Esophagus muscularis mucosa (tissue), 4 donors: ENCODE measurements at regions of chr2 and their contacts with region 1.

Region 1: GRCh38 chr2:205834796-205835195 is 152.5 kb downstream of the NRP2 start:
- DNase-seq: no peak
- H3K4me3 ChIP-seq: no peak overlapping the region
- H3K27ac ChIP-seq: peak overlapping the region; percentile 75 to 83 (median 80)
- H3K4me1 ChIP-seq: peaks cover 3 to 53% (median 45%) of the 10 kb centered on the region in 4 donors
- H3K27me3 ChIP-seq: no peaks in the 10 kb centered on the region
- CTCF ChIP-seq: no peak
- EP300 ChIP-seq: no peak
- POLR2A ChIP-seq: no peak

Region 2: GRCh38 chr2:205660521-205661124 is 174.2 kb before region 1 on chr2:
- intact Hi-C with region 1: no loop called
- DNase-seq: peak; percentile 91
- H3K4me3 ChIP-seq: no peak overlapping the region
- H3K27ac ChIP-seq: no peak overlapping the region
- H3K4me1 ChIP-seq: peaks cover 0 to 30% (median 21%) of the 10 kb centered on the region in 4 donors
- H3K27me3 ChIP-seq: no peaks in the 10 kb centered on the region
- CTCF ChIP-seq: no peak
- EP300 ChIP-seq: no peak
- POLR2A ChIP-seq: no peak

Region 3: DNA sequence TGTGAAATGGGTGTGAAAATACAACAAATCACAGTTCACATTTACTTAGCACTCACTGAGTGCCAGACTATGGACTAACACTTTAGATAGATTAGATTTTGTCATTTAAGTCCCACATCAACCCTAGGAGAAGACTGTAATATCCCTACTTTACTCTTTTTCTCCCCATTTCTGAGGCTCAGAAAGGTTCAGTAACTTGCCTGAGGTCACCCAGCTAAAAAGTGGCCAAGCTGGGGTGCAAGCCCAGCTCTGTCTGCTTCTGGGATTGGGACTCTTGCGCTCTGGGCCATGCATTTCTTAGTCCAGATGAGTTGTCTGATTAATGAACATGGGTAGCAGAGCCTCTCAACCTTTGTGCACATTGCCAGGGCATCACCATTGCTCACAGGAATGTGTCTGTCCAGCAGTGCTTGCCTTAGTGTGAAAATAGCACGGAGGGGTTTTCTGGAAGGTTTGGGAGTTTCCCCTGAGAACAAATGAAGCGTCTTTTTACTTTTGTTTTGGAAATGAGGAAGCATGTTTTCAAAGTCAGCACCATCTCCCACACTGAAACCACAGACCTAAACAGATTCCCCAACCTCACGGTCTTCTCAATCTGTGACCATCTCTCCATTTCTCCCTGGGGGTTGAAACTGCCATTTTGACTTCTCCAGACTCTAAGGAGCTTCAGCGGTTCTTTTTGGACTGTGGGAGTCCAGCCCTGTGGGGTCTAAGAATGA is 120.6 kb before region 1 on chr2:
- intact Hi-C with region 1: no loop called
- DNase-seq: no peak
- H3K4me3 ChIP-seq: no peak overlapping the region
- H3K27ac ChIP-seq: peak overlapping the region; percentile 87 to 98 (median 93)
- H3K4me1 ChIP-seq: peaks cover 6 to 100% (median 95%) of the 10 kb centered on the region in 4 donors
- H3K27me3 ChIP-seq: no peaks in the 10 kb centered on the region
- CTCF ChIP-seq: no peak
- EP300 ChIP-seq: no peak
- POLR2A ChIP-seq: no peak

Region 4: GRCh38 chr2:205776139-205776538 is 58.7 kb before region 1 on chr2:
- intact Hi-C with region 1: loop called (anchors 2 kb)
- DNase-seq: no peak
- H3K4me3 ChIP-seq: no peak overlapping the region
- H3K27ac ChIP-seq: peak overlapping the region; percentile 80 to 98 (median 90)
- H3K4me1 ChIP-seq: peaks cover 0 to 100% (median 95%) of the 10 kb centered on the region in 4 donors
- H3K27me3 ChIP-seq: no peaks in the 10 kb centered on the region
- CTCF ChIP-seq: peak; percentile 37 to 67 (median 49)
- EP300 ChIP-seq: no peak
- POLR2A ChIP-seq: no peak

Region 5: GRCh38 chr2:205872716-205873115 is 37.9 kb after region 1 on chr2:
- intact Hi-C with region 1: loop called (anchors 5 kb)
- DNase-seq: no peak
- H3K4me3 ChIP-seq: no peak overlapping the region
- H3K27ac ChIP-seq: no peak overlapping the region
- H3K4me1 ChIP-seq: no peaks in the 10 kb centered on the region
- H3K27me3 ChIP-seq: no peaks in the 10 kb centered on the region
- CTCF ChIP-seq: no peak
- EP300 ChIP-seq: no peak
- POLR2A ChIP-seq: no peak

Region 6: DNA sequence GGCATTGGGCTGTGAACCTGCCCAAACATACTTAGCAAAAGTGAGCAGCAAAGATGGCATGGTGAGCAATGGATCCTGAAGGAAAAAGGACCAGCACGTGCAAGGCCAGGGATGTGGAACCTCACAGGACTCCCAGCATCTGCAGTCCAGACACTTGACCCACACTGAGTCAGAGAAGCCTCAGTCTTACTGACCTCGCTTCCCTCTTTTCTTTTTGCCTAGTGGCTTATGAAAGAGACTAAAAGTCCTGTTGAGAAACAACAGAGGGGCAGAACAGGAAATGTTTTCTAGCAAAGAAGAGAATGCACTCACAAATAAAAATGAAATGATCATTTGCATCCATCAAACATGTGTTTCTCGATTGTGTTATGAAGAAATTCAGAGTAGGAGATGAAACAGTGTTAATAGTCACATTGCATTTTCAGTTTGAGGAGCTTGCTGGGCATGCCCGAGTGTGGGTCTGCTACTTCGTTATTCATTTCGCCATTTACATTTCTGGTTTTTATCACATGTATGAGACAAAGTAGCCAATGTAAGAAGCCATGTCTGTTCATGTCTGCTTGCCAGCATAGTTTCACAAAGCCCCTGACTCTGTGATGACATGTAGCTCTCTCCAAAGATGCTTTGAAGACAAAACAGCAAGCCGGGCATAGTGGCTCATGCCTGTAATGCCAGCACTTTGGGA is 132.7 kb after region 1 on chr2:
- intact Hi-C with region 1: no loop called
- DNase-seq: no peak
- H3K4me3 ChIP-seq: no peak overlapping the region
- H3K27ac ChIP-seq: no peak overlapping the region
- H3K4me1 ChIP-seq: no peaks in the 10 kb centered on the region
- H3K27me3 ChIP-seq: no peaks in the 10 kb centered on the region
- CTCF ChIP-seq: no peak
- EP300 ChIP-seq: no peak
- POLR2A ChIP-seq: no peak